Posterior cingulate gyrus (tissue), 11 donors: ENCODE measurements at regions of chr7 and their contacts with region 1.

Region 1: GRCh38 chr7:27196287-27196767 is 3.6 kb downstream of the HOXA13 start:
- DNase-seq: peak; percentile 49 to 96 (median 84)

Region 2: GRCh38 chr7:26490650-26491624 is 705.4 kb before region 1 on chr7:
- intact Hi-C with region 1: no loop called
- DNase-seq: peak in 6 of 10 donors; percentile 18 to 86 (median 30)

Region 3: GRCh38 chr7:27576360-27576944 is 380.1 kb after region 1 on chr7:
- intact Hi-C with region 1: loop called (anchors 2 kb)
- DNase-seq: no peak

Region 4: GRCh38 chr7:27774717-27775328 is 578.5 kb after region 1 on chr7:
- intact Hi-C with region 1: loop called (anchors 5 kb)
- DNase-seq: no peak

Region 5: GRCh38 chr7:27921081-27921836 is 724.9 kb after region 1 on chr7:
- intact Hi-C with region 1: loop called (anchors 2 kb)
- DNase-seq: no peak

Region 6: DNA sequence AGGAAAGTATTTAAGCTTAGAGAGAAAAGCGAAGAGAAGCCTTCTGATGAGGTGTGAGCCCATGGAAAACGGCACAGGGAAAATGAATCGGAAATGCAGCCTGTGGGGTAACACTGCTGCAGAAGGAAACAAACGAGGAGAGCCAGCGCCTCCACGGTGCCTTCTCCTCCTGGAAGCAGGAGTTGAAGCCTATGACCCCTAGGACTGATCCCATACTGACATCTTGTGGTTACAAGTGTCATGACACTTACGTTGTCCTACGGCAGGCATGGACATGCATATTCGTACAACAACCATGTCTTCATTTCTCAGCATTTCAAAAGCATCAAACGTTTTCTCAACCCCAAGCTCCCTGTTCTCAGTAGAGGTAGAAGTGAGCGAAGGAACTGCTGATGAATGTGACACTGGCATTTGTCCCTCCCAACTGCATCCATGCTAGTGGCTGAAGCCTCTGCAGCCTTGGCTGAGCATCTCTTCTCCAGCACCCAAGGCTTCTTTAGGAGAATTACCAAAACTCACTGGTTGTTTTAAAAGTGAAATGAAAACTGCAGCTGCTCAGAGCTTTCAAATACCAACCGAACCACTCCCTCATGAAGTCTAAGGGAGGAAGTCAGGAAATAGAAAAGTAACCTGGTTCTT is 824.1 kb after region 1 on chr7:
- intact Hi-C with region 1: loop called (anchors 2 kb)
- DNase-seq: peak; percentile 47 to 95 (median 67)

Region 7: GRCh38 chr7:28078036-28078901 is 881.9 kb after region 1 on chr7:
- intact Hi-C with region 1: loop called (anchors 5 kb)
- DNase-seq: peak in 6 of 10 donors; percentile 31 to 89 (median 47)

Region 8: GRCh38 chr7:28245123-28245878 is 1049.0 kb after region 1 on chr7:
- intact Hi-C with region 1: no loop called
- DNase-seq: no peak